Tibial artery (tissue), 4 donors: ENCODE measurements at regions of chr7 and their contacts with region 1.

Region 1: GRCh38 chr7:22854158-22855048 is 31.8 kb upstream of the TOMM7 start:
- DNase-seq: peak; percentile 94 to 96
- H3K4me3 ChIP-seq: peak overlapping the region; percentile 85
- H3K27ac ChIP-seq: peak overlapping the region; percentile 94 to 96
- H3K4me1 ChIP-seq: peaks cover 0 to 45% (median 19%) of the 10 kb centered on the region in 4 donors
- H3K27me3 ChIP-seq: no peaks in the 10 kb centered on the region
- CTCF ChIP-seq: peak in 1 of 2 experiments; percentile 54

Region 2: GRCh38 chr7:23013715-23014649 is 159.6 kb after region 1 on chr7 and contains the start of gene HYCC1:
- intact Hi-C with region 1: loop called (anchors 5 kb)
- DNase-seq: peak; percentile 99 to 100
- H3K4me3 ChIP-seq: peak within 1 kb of the TSS; percentile 87 to 88
- H3K27ac ChIP-seq: peak within 1 kb of the TSS; percentile 86 to 89
- H3K4me1 ChIP-seq: peaks cover 0 to 61% (median 14%) of the 10 kb centered on the region in 4 donors
- H3K27me3 ChIP-seq: no peaks in the 10 kb centered on the region
- CTCF ChIP-seq: peak; percentile 74 to 81